CD8-positive, alpha-beta T cell (primary cell): ENCODE measurements at regions of chr9 and their contacts with region 1.

Region 1: GRCh38 chr9:105712773-105713172 is 18.4 kb downstream of the TMEM38B start:
- DNase-seq: no peak
- ATAC-seq: no peak
- H3K4me3 ChIP-seq: no peak overlapping the region
- H3K4me3 Mint-ChIP-seq: no peak overlapping the region
- H3K27ac ChIP-seq: no peak overlapping the region
- H3K27ac Mint-ChIP-seq: no peak overlapping the region
- H3K4me1 ChIP-seq: peaks cover 9% of the 10 kb centered on the region
- H3K4me1 Mint-ChIP-seq: peaks cover 7% of the 10 kb centered on the region
- H3K27me3 ChIP-seq: no peaks in the 10 kb centered on the region
- H3K27me3 Mint-ChIP-seq: no peaks in the 10 kb centered on the region
- CTCF ChIP-seq: no peak

Region 2: GRCh38 chr9:104863180-104863883 is 849.4 kb before region 1 on chr9:
- CTCF ChIA-PET with region 1: no interaction called
- POLR2A ChIA-PET with region 1: no interaction called
- intact Hi-C with region 1: loop called in 1 of 2 experiments (anchors 5 kb)
- DNase-seq: peak; percentile 9 to 73 (median 41)
- ATAC-seq: peak; percentile 91
- H3K4me3 ChIP-seq: no peak overlapping the region
- H3K4me3 Mint-ChIP-seq: no peak overlapping the region
- H3K27ac ChIP-seq: no peak overlapping the region
- H3K27ac Mint-ChIP-seq: no peak overlapping the region
- H3K4me1 ChIP-seq: no peaks in the 10 kb centered on the region
- H3K4me1 Mint-ChIP-seq: peaks cover 4% of the 10 kb centered on the region
- H3K27me3 ChIP-seq: no peaks in the 10 kb centered on the region
- H3K27me3 Mint-ChIP-seq: peaks cover 4% of the 10 kb centered on the region
- CTCF ChIP-seq: peak; percentile 82

Region 3: GRCh38 chr9:105425841-105426436 is 286.8 kb before region 1 on chr9:
- CTCF ChIA-PET with region 1: no interaction called
- POLR2A ChIA-PET with region 1: no interaction called
- intact Hi-C with region 1: loop called (anchors 5 to 10 kb)
- DNase-seq: no peak
- ATAC-seq: no peak
- H3K4me3 ChIP-seq: no peak overlapping the region
- H3K4me3 Mint-ChIP-seq: no peak overlapping the region
- H3K27ac ChIP-seq: no peak overlapping the region
- H3K27ac Mint-ChIP-seq: no peak overlapping the region
- H3K4me1 ChIP-seq: no peaks in the 10 kb centered on the region
- H3K4me1 Mint-ChIP-seq: no peaks in the 10 kb centered on the region
- H3K27me3 ChIP-seq: no peaks in the 10 kb centered on the region
- H3K27me3 Mint-ChIP-seq: peaks cover 6% of the 10 kb centered on the region
- CTCF ChIP-seq: peak; percentile 35

Region 4: DNA sequence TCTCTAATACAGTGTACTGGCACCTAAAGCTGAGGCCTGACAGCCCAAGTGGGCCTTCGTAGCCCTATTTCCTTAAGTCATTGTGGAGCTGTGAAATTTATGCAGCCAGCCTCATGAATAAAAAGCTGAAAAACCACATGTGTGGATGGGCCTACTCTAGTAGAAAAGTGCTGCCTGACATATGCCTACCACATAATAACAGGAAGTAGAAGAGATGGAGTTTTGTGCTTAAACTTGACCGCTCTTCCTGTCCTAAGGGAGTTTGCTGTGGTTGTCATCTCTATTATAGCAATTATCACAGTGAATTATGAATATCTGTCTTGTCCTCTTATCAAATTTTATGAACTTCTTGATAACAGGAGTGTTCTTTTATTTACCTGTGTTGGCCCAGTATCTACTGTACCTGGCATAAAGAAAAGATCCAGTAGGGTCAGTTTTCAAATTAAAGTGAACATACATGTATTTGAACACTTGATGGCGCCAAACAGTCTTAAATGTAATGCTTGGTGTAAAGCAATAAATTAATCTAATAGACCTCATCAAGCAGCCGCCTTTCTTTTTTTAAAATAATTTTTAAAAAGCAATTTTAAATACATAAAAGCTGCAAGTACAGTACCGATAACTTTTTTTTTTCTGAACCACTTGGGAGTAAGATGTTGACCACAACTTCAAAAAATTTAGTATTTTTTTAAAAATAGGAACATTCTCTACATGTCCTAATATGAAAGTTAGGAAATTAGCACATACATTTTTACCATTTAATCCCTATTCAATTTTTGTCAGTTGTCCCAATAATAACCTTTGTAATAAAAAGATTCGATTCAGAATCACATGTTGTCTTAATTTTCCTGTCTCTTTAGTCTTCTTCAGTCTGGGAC is 103.8 kb before region 1 on chr9:
- CTCF ChIA-PET with region 1: interaction called, 12 read pairs
- POLR2A ChIA-PET with region 1: no interaction called
- intact Hi-C with region 1: no loop called
- DNase-seq: peak in 2 of 9 experiments; percentile 47 to 61
- ATAC-seq: no peak
- H3K4me3 ChIP-seq: no peak overlapping the region
- H3K4me3 Mint-ChIP-seq: no peak overlapping the region
- H3K27ac ChIP-seq: no peak overlapping the region
- H3K27ac Mint-ChIP-seq: no peak overlapping the region
- H3K4me1 ChIP-seq: no peaks in the 10 kb centered on the region
- H3K4me1 Mint-ChIP-seq: no peaks in the 10 kb centered on the region
- H3K27me3 ChIP-seq: no peaks in the 10 kb centered on the region
- H3K27me3 Mint-ChIP-seq: no peaks in the 10 kb centered on the region
- CTCF ChIP-seq: peak; percentile 70

Region 5: GRCh38 chr9:105656131-105656921 is 56.4 kb before region 1 on chr9:
- CTCF ChIA-PET with region 1: no interaction called
- POLR2A ChIA-PET with region 1: no interaction called
- intact Hi-C with region 1: loop called (anchors 5 to 10 kb)
- DNase-seq: peak in 3 of 9 experiments; percentile 5 to 13 (median 5)
- ATAC-seq: no peak
- H3K4me3 ChIP-seq: peak overlapping the region in 1 of 2 experiments; percentile 10
- H3K4me3 Mint-ChIP-seq: peak overlapping the region; percentile 74
- H3K27ac ChIP-seq: no peak overlapping the region
- H3K27ac Mint-ChIP-seq: no peak overlapping the region
- H3K4me1 ChIP-seq: peaks cover 7% of the 10 kb centered on the region
- H3K4me1 Mint-ChIP-seq: peaks cover 8% of the 10 kb centered on the region
- H3K27me3 ChIP-seq: peaks cover 8 to 19% of the 10 kb centered on the region in 2 experiments
- H3K27me3 Mint-ChIP-seq: peaks cover 35% of the 10 kb centered on the region
- CTCF ChIP-seq: no peak

Region 6: DNA sequence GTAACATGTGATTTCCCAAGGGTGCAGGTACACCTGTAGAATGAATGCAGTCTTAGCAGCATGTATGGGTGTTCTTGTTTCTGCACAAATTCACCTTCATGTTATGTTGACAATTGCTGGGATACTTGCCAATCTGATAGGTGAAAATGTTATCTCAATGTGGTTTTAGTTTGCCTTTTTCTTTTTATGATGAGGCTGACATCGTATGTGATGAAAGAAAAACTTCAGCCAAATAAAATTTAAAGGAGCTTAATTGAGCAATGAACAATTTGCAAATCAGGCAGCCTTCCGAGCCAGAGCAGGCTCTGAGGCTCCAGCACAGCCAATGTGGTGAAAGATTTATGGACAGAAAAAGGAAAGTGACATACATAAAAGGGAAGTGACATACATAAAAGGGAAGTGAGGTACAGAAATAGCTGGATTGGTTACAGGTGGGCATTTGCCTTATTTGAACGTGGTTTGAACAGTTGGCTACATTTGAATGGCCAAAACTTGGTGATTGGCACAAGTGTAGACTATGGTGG is 40.0 kb before region 1 on chr9:
- CTCF ChIA-PET with region 1: no interaction called
- POLR2A ChIA-PET with region 1: no interaction called
- intact Hi-C with region 1: loop called in 1 of 2 experiments (anchors 5 kb)
- DNase-seq: no peak
- ATAC-seq: no peak
- H3K4me3 ChIP-seq: no peak overlapping the region
- H3K4me3 Mint-ChIP-seq: no peak overlapping the region
- H3K27ac ChIP-seq: no peak overlapping the region
- H3K27ac Mint-ChIP-seq: no peak overlapping the region
- H3K4me1 ChIP-seq: no peaks in the 10 kb centered on the region
- H3K4me1 Mint-ChIP-seq: no peaks in the 10 kb centered on the region
- H3K27me3 ChIP-seq: no peaks in the 10 kb centered on the region
- H3K27me3 Mint-ChIP-seq: peaks cover 2% of the 10 kb centered on the region
- CTCF ChIP-seq: no peak

Region 7: DNA sequence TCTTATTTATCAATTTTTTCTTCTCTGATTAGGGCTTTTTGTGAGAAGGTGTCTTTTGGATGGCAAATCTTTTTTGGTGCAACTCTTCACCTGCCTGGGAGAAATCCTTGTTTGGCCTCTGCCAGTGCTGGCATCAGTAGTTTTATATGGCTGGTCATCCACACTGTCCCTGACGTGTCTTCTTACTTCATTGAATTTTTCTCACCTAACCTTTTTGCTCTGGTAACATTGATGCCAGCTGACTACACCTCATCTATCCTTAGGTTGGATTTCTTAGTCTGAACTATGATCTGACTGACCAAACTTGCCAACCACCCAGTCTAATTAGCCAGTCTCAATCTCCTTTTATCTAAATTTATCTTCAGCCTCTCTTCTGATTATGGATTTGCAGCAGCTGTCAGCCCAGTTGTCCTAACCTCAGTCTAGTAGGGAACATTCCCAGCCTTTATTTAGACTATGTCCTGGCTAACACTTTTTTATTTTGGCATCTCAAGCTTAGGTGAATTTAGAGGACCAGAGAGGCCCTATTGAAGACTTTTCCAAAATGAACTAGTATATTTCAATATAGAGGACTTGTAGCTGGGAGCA is 29.0 kb before region 1 on chr9:
- CTCF ChIA-PET with region 1: no interaction called
- POLR2A ChIA-PET with region 1: no interaction called
- intact Hi-C with region 1: no loop called
- DNase-seq: no peak
- ATAC-seq: no peak
- H3K4me3 ChIP-seq: no peak overlapping the region
- H3K4me3 Mint-ChIP-seq: no peak overlapping the region
- H3K27ac ChIP-seq: no peak overlapping the region
- H3K27ac Mint-ChIP-seq: no peak overlapping the region
- H3K4me1 ChIP-seq: no peaks in the 10 kb centered on the region
- H3K4me1 Mint-ChIP-seq: no peaks in the 10 kb centered on the region
- H3K27me3 ChIP-seq: peaks cover 0 to 2% of the 10 kb centered on the region in 2 experiments
- H3K27me3 Mint-ChIP-seq: peaks cover 9% of the 10 kb centered on the region
- CTCF ChIP-seq: no peak